ENCODE measurements at regions of chr11 and their contacts with region 1.

Region 1: GRCh38 chr11:107660066-107660465 is 51.8 kb downstream of the SLN start:
- DNase-seq: no peak
- ATAC-seq: no peak
- H3K4me3 ChIP-seq: no peak overlapping the region
- H3K27ac ChIP-seq: no peak overlapping the region
- H3K4me1 ChIP-seq: no peaks in the 10 kb centered on the region
- H3K27me3 ChIP-seq: peaks cover 2% of the 10 kb centered on the region; the same call in 1 of the 2 replicates
- CTCF ChIP-seq: no peak
- POLR2A ChIP-seq: no peak
- RAD21 ChIP-seq: no peak

Region 2: DNA sequence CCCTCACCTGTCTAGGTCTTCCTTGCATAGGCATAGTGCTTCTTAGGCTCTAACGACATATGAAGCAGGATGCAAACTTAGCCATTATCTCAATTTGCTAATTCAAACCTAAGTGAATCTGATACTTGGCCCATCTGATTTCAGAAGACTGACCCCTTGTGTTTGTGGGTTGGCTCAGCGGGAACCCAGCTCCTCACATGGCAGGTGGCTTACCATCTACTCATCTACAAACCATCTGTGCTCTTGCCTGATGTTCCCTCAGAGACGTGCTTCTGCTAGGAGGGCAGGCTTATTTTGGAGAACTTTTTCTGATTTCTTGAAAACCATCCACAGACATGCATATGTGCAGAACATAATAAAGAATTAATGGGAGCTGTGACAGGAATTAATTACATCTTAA is 53.9 kb before region 1 on chr11:
- CTCF ChIA-PET with region 1: no interaction called
- POLR2A ChIA-PET with region 1: no interaction called
- dilution Hi-C with region 1: no loop called
- in situ Hi-C with region 1: no loop called
- intact Hi-C with region 1: loop called (anchors 5 kb)
- DNase-seq: no peak
- ATAC-seq: no peak
- H3K4me3 ChIP-seq: no peak overlapping the region
- H3K27ac ChIP-seq: no peak overlapping the region
- H3K4me1 ChIP-seq: no peaks in the 10 kb centered on the region
- H3K27me3 ChIP-seq: peaks cover 10% of the 10 kb centered on the region; the same call in 1 of the 2 replicates
- CTCF ChIP-seq: 0 out of 2 replicates have a peak, but pooled peaks have one; percentile 8
- POLR2A ChIP-seq: no peak
- RAD21 ChIP-seq: no peak

Measured in IMR-90 (cell line).